H1 (cell line): ENCODE measurements at regions of chr6 and their contacts with region 1.

Region 1: GRCh38 chr6:41027799-41028628 is 11.0 kb downstream of the UNC5CL start:
- DNase-seq: peak; percentile 60 to 97
- H3K4me3 ChIP-seq: peak overlapping the region; percentile 30 to 68 (median 57)
- H3K27ac ChIP-seq: no peak overlapping the region; the same call in 1 of the 2 replicates
- H3K4me1 ChIP-seq: peaks cover 0 to 11% (median 3%) of the 10 kb centered on the region in 4 experiments; a peak in 5 of 7 replicates
- H3K27me3 ChIP-seq: no peaks in the 10 kb centered on the region; a peak in 1 of 7 replicates
- CTCF ChIP-seq: peak; percentile 89 to 99 (median 92)
- EP300 ChIP-seq: no peak
- POLR2A ChIP-seq: peak in 1 of 2 experiments; percentile 36; a peak in 2 of 3 replicates
- RAD21 ChIP-seq: peak; percentile 92 to 96

Region 2: DNA sequence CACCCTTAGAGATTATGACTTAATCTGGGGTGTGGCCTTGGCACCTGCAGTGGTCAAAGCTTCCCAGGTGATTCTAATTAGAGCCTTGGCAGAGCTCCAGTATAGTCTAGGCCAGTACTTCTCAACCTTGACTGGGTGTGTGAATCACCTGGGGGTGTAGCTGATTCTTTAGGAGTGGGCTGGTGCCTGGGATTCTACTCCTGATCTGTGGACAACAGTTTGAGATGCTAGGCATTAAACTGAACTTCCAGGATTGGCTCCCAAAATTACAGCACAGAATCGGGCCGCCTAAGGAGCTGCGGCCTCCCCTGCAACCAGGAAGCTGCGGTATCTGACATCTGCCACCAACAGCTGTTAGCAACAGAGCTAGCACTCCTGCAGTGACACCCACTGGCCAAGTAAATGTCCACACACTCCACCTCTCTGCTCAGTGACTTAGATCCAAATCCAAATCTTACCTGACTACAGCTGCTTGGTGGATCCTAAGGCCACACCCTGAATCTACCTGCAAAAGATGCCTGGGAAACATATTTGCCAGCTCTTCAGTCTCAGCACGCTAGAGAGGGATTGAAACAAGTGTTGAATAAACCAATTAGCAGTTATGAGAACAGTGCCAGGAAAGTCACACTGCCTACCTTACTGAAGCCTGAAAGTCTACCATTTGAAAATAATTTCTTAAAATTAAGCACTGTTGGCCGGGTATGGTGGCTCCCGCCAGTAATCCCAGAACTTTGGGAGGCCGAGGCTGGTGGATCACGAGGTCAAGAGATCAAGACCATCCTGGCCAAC is 115.7 kb before region 1 on chr6:
- CTCF ChIA-PET with region 1: interaction called, 33 read pairs
- POLR2A ChIA-PET with region 1: interaction called, 4 read pairs
- DNase-seq: peak in 1 of 2 experiments; percentile 17
- H3K4me3 ChIP-seq: no peak overlapping the region
- H3K27ac ChIP-seq: no peak overlapping the region
- H3K4me1 ChIP-seq: no peaks in the 10 kb centered on the region
- H3K27me3 ChIP-seq: peaks cover 0 to 1% (median 0%) of the 10 kb centered on the region in 4 experiments; a peak in 2 of 7 replicates
- CTCF ChIP-seq: peak; percentile 61 to 78 (median 67)
- EP300 ChIP-seq: no peak
- POLR2A ChIP-seq: no peak
- RAD21 ChIP-seq: peak; percentile 63 to 78

Region 3: GRCh38 chr6:40962241-40962640 is 65.8 kb before region 1 on chr6:
- CTCF ChIA-PET with region 1: interaction called, 10 read pairs
- POLR2A ChIA-PET with region 1: no interaction called
- DNase-seq: no peak
- H3K4me3 ChIP-seq: no peak overlapping the region
- H3K27ac ChIP-seq: no peak overlapping the region; the same call in 1 of the 2 replicates
- H3K4me1 ChIP-seq: peaks cover 0 to 3% (median 0%) of the 10 kb centered on the region in 4 experiments; a peak in 1 of 7 replicates
- H3K27me3 ChIP-seq: no peaks in the 10 kb centered on the region
- CTCF ChIP-seq: no peak
- EP300 ChIP-seq: no peak
- POLR2A ChIP-seq: no peak
- RAD21 ChIP-seq: no peak

Region 4: DNA sequence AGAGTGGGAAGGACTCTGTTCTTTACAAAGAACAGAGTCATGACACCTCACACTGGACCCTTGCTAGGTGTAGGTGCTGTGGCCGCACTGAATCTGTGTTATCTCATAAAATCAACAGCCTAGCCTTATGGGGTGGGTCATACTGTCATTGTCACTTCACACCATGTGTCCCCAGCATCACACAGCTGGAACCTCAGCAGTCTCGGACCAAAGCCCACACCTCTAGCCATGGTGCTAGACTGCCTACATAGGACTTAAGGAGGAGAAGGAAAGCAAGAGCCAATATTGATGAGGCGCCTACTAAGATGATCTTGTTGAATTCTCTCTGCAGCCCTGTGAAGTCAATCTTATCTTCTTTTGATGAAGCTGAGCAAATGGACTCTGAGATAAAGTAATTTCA is 20.0 kb before region 1 on chr6:
- CTCF ChIA-PET with region 1: interaction called, 33 read pairs
- POLR2A ChIA-PET with region 1: interaction called, 5 read pairs
- DNase-seq: no peak
- H3K4me3 ChIP-seq: no peak overlapping the region
- H3K27ac ChIP-seq: no peak overlapping the region
- H3K4me1 ChIP-seq: no peaks in the 10 kb centered on the region; a peak in 1 of 7 replicates
- H3K27me3 ChIP-seq: no peaks in the 10 kb centered on the region
- CTCF ChIP-seq: no peak
- EP300 ChIP-seq: no peak
- POLR2A ChIP-seq: no peak
- RAD21 ChIP-seq: no peak

Region 5: GRCh38 chr6:41039060-41039998 is 11.3 kb after region 1 on chr6 and contains the start of gene UNC5CL:
- CTCF ChIA-PET with region 1: interaction called, 80 read pairs
- POLR2A ChIA-PET with region 1: interaction called, 9 read pairs
- DNase-seq: peak in 1 of 2 experiments; percentile 84
- H3K4me3 ChIP-seq: no peak within 1 kb of the TSS
- H3K27ac ChIP-seq: no peak within 1 kb of the TSS
- H3K4me1 ChIP-seq: peaks cover 0 to 4% (median 3%) of the 10 kb centered on the region in 4 experiments; a peak in 6 of 7 replicates
- H3K27me3 ChIP-seq: no peaks in the 10 kb centered on the region
- CTCF ChIP-seq: peak; percentile 83 to 89 (median 85)
- EP300 ChIP-seq: no peak
- POLR2A ChIP-seq: no peak
- RAD21 ChIP-seq: peak; percentile 76 to 80
- total RNA-seq, gene UNC5CL: 1.3 and 1.4 TPM in 2 replicates

Region 6: GRCh38 chr6:41051873-41052272 is 23.9 kb after region 1 on chr6:
- CTCF ChIA-PET with region 1: interaction called, 41 read pairs
- POLR2A ChIA-PET with region 1: interaction called, 3 read pairs
- DNase-seq: no peak
- H3K4me3 ChIP-seq: no peak overlapping the region
- H3K27ac ChIP-seq: no peak overlapping the region
- H3K4me1 ChIP-seq: peaks cover 0 to 5% (median 0%) of the 10 kb centered on the region in 4 experiments; a peak in 2 of 7 replicates
- H3K27me3 ChIP-seq: no peaks in the 10 kb centered on the region
- CTCF ChIP-seq: no peak
- EP300 ChIP-seq: no peak
- POLR2A ChIP-seq: no peak
- RAD21 ChIP-seq: no peak

Region 7: GRCh38 chr6:41239467-41240159 is 211.6 kb after region 1 on chr6:
- CTCF ChIA-PET with region 1: no interaction called
- POLR2A ChIA-PET with region 1: no interaction called
- DNase-seq: peak in 1 of 2 experiments; percentile 76
- H3K4me3 ChIP-seq: peak overlapping the region; percentile 33 to 66 (median 44); a peak in 7 of 8 replicates
- H3K27ac ChIP-seq: no peak overlapping the region
- H3K4me1 ChIP-seq: peaks cover 0 to 4% (median 0%) of the 10 kb centered on the region in 4 experiments; a peak in 2 of 7 replicates
- H3K27me3 ChIP-seq: no peaks in the 10 kb centered on the region; a peak in 1 of 7 replicates
- CTCF ChIP-seq: peak; percentile 15 to 29 (median 20); a peak in 3 of 4 replicates
- EP300 ChIP-seq: no peak
- POLR2A ChIP-seq: no peak
- RAD21 ChIP-seq: peak in 1 of 2 experiments; percentile 4; a peak in 1 of 4 replicates